ENCODE measurements at regions of chr15 and their contacts with region 1.

Region 1: DNA sequence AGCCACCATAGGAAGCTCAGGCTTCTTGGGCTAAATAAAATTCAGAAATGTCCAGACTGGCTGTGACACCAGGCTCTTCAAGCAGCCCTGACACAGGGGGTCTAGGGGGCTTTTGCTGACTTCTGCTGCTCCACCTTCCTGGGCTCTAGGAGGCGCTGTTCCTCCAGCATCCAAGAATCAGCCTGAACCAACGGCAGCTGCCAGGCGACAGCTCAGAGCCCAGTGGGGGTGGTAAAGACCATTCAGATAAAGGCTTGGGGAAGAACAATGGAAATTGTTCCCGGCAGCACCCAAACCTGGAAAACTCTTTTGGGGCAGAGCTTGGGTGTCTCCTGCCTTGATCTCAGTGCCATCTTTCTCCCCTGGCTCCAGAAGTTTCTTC is 21.6 kb upstream of the PSTPIP1 start:
- DNase-seq: no peak

Region 2: GRCh38 chr15:76115888-76116885 is 857.2 kb before region 1 on chr15:
- intact Hi-C with region 1: loop called in 1 of 2 experiments (anchors 10 kb)
- DNase-seq: no peak